Activated B cell treated with CpG ODN at 0.5 μM for 24 hours (primary cell): ENCODE measurements at regions of chrX and their contacts with region 1.

Region 1: GRCh38 chrX:63754860-63755582 is 30.0 kb downstream of the ARHGEF9 start:
- DNase-seq: peak; percentile 70
- ATAC-seq: peak; percentile 98
- H3K4me3 Mint-ChIP-seq: peak overlapping the region; percentile 99
- H3K27ac Mint-ChIP-seq: peak overlapping the region; percentile 98
- H3K4me1 Mint-ChIP-seq: peaks cover 25% of the 10 kb centered on the region
- H3K27me3 Mint-ChIP-seq: no peaks in the 10 kb centered on the region
- CTCF ChIP-seq: no peak

Region 2: DNA sequence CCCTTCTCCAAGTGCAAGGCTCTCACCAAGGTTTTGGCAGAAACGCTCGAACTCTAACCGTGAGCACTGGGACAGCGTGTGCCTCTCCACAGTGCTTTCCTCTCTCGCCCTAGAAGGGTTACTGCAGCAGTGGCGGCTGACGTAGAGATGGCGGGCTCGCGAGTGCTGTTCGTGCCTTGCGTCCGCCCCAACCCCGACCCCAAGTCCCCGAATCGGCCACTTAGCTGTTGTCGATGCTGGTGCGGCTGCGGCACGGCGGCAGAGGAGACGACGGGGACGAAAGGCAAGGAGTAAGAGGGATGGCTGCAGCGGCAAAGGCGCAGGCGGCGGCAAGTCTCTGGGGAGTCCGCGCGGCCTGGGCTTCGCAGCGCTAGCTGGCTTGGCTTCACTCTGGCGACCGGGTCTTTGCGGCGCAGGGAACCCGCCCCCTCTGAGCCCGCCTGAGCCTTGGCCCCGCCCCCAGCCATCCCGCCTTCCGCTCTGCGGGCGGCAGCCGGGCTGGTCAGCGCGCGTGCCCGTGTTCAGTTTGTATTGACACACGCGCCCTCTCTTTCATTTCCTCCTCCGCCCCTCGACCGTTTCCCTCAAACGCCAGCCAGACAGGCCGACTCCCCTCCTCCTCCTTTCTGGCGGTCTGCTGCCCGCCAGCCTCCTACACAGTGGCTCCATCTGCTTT is 403.9 kb before region 1 on chrX and contains the start of gene SPIN4:
- CTCF ChIA-PET with region 1: no interaction called
- POLR2A ChIA-PET with region 1: interaction called, 3 read pairs
- intact Hi-C with region 1: loop called (anchors 2 kb)
- DNase-seq: peak; percentile 67
- ATAC-seq: peak; percentile 97
- H3K4me3 Mint-ChIP-seq: peak within 1 kb of the TSS; percentile 94
- H3K27ac Mint-ChIP-seq: peak within 1 kb of the TSS; percentile 80
- H3K4me1 Mint-ChIP-seq: peaks cover 18% of the 10 kb centered on the region
- H3K27me3 Mint-ChIP-seq: no peaks in the 10 kb centered on the region
- CTCF ChIP-seq: no peak
- total RNA-seq, gene SPIN4: 2.1 and 2.4 TPM in 2 replicates

Region 3: DNA sequence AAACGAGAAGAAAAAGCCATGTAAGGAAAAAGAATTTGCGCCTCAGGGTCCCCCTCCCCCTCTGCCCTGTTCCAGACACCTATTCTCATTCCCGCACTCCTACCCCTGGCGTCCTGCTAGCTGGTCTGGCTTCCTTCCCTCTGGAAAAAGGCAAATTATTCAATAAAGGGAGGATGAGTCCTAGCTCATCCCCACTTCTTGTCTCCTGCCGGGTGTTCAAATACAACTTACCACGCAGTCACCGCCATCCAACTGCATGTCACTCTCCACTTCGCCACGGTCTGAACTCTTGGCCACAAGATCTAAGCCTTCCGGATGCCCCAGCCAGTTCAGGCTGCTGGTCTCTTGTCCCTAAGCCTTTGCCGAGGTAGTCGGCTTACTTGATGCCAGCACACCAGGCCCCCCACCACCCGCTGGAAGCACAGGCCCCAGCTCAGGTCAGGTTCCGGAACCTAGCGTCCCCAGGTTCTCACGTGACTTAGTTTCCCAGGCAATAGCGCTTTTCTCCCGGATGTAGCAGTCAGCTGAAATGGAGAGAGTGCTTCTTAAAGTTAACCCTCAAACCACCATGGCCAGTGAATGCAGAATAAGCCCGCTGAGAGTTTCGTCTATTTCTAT is 194.3 kb before region 1 on chrX:
- CTCF ChIA-PET with region 1: no interaction called
- POLR2A ChIA-PET with region 1: interaction called, 5 read pairs
- intact Hi-C with region 1: loop called (anchors 1 kb)
- DNase-seq: peak; percentile 34
- ATAC-seq: peak; percentile 78
- H3K4me3 Mint-ChIP-seq: peak overlapping the region; percentile 97
- H3K27ac Mint-ChIP-seq: peak overlapping the region; percentile 87
- H3K4me1 Mint-ChIP-seq: peaks cover 27% of the 10 kb centered on the region
- H3K27me3 Mint-ChIP-seq: no peaks in the 10 kb centered on the region
- CTCF ChIP-seq: no peak

Region 4: GRCh38 chrX:63768760-63769159 is 13.7 kb after region 1 on chrX:
- CTCF ChIA-PET with region 1: no interaction called
- POLR2A ChIA-PET with region 1: no interaction called
- intact Hi-C with region 1: no loop called
- DNase-seq: no peak
- ATAC-seq: no peak
- H3K4me3 Mint-ChIP-seq: no peak overlapping the region
- H3K27ac Mint-ChIP-seq: no peak overlapping the region
- H3K4me1 Mint-ChIP-seq: no peaks in the 10 kb centered on the region
- H3K27me3 Mint-ChIP-seq: no peaks in the 10 kb centered on the region
- CTCF ChIP-seq: no peak

Region 5: GRCh38 chrX:64205735-64206491 is 450.9 kb after region 1 on chrX:
- CTCF ChIA-PET with region 1: no interaction called
- POLR2A ChIA-PET with region 1: interaction called, 9 read pairs
- intact Hi-C with region 1: loop called (anchors 1 kb)
- DNase-seq: peak; percentile 75
- ATAC-seq: peak; percentile 88
- H3K4me3 Mint-ChIP-seq: peak overlapping the region; percentile 92
- H3K27ac Mint-ChIP-seq: peak overlapping the region; percentile 95
- H3K4me1 Mint-ChIP-seq: peaks cover 18% of the 10 kb centered on the region
- H3K27me3 Mint-ChIP-seq: no peaks in the 10 kb centered on the region
- CTCF ChIP-seq: no peak

Region 6: DNA sequence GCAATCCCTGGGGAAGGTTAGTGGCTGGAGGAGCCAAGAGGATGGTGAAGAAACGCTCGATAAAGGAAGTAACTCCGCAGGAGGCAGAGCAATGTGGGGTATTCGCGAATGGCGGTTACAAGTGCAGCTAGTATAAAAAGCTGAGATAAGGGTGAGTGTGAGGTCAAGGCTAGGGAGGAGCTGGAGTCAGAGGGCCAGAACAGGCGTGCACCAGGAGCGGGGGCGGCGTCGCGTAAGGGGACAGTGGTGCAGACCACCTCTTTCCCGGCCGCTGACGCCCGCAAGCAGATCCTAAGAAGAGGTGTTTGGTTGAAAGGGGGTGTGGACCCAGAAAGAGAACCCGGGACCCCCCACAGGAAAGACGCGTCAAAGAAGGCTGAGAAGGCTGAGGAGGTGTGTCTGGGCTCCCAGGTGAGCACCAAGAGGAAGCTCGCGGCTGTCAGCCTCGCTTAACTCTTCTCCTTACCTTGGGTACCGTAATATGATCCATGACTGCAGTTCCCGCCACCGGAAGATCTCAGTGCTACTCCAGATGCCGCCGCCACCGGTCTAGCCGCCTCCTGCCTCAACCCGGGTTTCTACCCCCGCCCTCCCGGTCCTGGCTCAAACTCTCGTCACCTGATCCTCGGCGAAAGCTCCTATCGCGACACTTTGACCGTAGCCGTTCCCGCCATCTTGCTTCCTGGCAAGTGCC is 640.0 kb after region 1 on chrX and contains the start of gene MTMR8:
- CTCF ChIA-PET with region 1: no interaction called
- POLR2A ChIA-PET with region 1: no interaction called
- intact Hi-C with region 1: loop called (anchors 10 kb)
- DNase-seq: peak; percentile 58
- ATAC-seq: peak; percentile 92
- H3K4me3 Mint-ChIP-seq: peak within 1 kb of the TSS; percentile 95
- H3K27ac Mint-ChIP-seq: peak within 1 kb of the TSS; percentile 82
- H3K4me1 Mint-ChIP-seq: peaks cover 29% of the 10 kb centered on the region
- H3K27me3 Mint-ChIP-seq: no peaks in the 10 kb centered on the region
- CTCF ChIP-seq: no peak
- total RNA-seq, gene MTMR8: 4.3 and 4.7 TPM in 2 replicates

Region 7: DNA sequence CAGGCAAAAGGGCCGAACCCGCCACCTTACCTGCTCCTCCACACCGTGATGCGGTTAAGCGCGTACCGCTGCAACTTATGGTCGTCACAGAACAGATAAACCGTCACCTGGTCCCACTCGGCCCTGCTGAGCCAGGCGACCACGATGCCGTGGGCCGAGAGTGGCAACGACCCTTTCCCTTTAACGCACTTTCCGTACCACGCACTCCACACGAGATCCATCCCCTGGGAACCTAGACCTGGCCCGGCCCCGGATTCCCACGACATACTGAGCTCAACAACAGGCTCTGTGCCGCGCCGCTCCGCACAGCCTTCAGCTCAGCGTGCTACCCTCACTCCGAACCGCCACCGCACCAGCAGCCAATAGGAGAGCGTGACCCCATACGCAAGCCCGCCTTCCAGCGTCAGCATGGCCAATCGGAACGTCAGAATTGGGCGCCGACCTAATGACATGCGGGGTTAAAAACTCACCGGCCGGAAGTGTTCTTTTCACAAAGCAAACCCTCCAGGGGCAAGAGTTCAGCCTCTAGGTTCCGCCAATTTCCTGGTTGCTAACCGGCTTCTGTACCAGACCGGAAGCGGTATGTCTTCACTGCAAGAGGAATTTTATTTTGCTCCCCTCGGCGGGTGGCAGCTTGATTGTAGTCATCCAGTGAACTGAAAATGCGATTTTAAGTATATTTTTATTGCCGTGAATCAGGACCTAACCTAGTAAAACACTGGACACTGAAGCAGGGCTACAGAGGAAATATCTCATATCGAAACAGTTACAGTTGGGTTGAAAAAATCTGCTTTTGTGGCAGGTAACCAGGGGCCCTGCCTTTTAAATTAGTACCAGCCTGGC is 1779.7 kb after region 1 on chrX and contains the start of gene LAS1L:
- CTCF ChIA-PET with region 1: no interaction called
- POLR2A ChIA-PET with region 1: interaction called, 3 read pairs
- intact Hi-C with region 1: loop called (anchors 2 kb)
- DNase-seq: peak; percentile 77
- ATAC-seq: peak; percentile 99
- H3K4me3 Mint-ChIP-seq: peak within 1 kb of the TSS; percentile 100
- H3K27ac Mint-ChIP-seq: peak within 1 kb of the TSS; percentile 98
- H3K4me1 Mint-ChIP-seq: peaks cover 23% of the 10 kb centered on the region
- H3K27me3 Mint-ChIP-seq: no peaks in the 10 kb centered on the region
- CTCF ChIP-seq: no peak
- total RNA-seq, gene LAS1L: 51.9 and 54.0 TPM in 2 replicates